Activated CD4-positive, alpha-beta T cell treated with anti-CD3 and anti-CD28 coated beads, Interleukin-2, amount 10 ng/mL, durations not matched to agents 7 days and 5 days (primary cell): ENCODE measurements at regions of chr16 and their contacts with region 1.

Region 1: GRCh38 chr16:30091474-30092372 is at the start of gene TBX6:
- DNase-seq: peak; percentile 93
- H3K4me3 Mint-ChIP-seq: peak within 1 kb of the TSS; percentile 81
- H3K27ac Mint-ChIP-seq: peak within 1 kb of the TSS; percentile 90
- H3K4me1 Mint-ChIP-seq: peaks cover 65% of the 10 kb centered on the region
- H3K27me3 Mint-ChIP-seq: no peaks in the 10 kb centered on the region
- total RNA-seq, gene TBX6: 1.2 to 1.7 TPM

Region 2: DNA sequence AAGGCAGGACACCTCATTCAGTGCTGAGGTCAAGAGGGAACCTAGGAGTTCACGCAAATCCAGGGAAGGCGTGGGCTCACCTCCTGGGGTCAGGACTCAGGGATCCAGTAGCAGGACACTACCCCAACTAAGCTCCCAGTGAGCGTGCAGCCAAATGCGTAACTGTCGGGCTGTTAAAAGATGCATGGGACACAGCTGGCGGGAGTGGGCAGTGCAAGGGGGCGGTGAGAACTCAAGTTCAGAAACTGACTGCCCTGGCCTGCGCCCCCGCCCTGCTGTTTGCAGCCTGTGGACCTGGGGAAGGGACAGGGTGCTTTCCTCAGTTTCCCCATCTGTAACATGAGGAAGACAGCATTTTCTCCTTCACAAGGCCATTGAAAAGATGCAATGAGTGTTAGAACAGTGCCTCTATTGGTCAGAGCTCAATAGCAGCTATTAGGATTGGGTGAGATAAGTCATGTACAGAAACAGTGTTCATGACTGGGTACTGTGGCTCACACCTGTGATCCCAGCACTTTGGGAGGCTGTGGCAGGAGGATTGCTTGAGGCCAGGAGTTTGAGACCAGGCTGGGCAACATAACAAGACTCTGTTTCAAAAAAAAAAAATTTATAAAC is 248.9 kb before region 1 on chr16:
- CTCF ChIA-PET with region 1: no interaction called
- POLR2A ChIA-PET with region 1: no interaction called
- DNase-seq: no peak
- H3K4me3 Mint-ChIP-seq: no peak overlapping the region
- H3K27ac Mint-ChIP-seq: no peak overlapping the region
- H3K4me1 Mint-ChIP-seq: peaks cover 8% of the 10 kb centered on the region
- H3K27me3 Mint-ChIP-seq: no peaks in the 10 kb centered on the region

Region 3: DNA sequence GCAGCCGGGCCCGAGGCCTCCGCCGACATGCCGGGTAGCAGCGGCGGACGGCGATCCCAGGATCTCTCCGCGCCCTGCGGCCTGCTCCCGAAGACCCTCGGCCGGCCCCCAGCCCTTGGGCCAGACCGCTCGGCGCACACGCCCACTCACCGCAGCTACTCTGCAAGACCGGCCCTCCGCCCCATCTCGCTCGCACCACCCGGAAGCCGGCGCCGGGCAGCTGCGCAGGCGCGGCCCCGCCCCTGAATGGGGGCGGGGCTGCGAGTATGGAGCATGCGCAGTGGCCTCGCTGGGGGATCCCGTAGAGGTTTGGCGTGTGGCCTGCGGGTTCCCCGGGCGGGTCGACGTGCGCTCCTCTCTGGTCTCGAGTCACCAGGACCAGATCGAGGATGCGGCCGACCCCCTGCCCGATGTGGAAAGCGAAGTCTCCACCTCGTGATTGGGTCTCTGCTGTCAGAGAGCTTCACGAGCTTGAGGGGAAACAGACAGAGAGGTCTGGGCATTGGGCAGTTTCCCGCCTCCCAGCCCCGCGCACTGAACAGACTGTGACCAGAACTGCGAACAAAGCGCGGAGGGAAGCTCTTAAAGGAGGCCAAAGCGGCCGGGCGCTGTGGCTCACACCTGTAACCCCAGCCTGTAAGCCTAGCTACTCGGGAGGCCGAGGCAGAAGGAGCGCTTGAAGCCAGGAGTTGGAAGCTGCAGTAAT is 165.6 kb before region 1 on chr16 and contains the start of gene KCTD13:
- CTCF ChIA-PET with region 1: no interaction called
- POLR2A ChIA-PET with region 1: no interaction called
- DNase-seq: peak; percentile 86
- H3K4me3 Mint-ChIP-seq: peak within 1 kb of the TSS; percentile 89
- H3K27ac Mint-ChIP-seq: peak within 1 kb of the TSS; percentile 94
- H3K4me1 Mint-ChIP-seq: peaks cover 36% of the 10 kb centered on the region
- H3K27me3 Mint-ChIP-seq: no peaks in the 10 kb centered on the region
- total RNA-seq, gene KCTD13: 28.4 to 36.1 TPM

Region 4: DNA sequence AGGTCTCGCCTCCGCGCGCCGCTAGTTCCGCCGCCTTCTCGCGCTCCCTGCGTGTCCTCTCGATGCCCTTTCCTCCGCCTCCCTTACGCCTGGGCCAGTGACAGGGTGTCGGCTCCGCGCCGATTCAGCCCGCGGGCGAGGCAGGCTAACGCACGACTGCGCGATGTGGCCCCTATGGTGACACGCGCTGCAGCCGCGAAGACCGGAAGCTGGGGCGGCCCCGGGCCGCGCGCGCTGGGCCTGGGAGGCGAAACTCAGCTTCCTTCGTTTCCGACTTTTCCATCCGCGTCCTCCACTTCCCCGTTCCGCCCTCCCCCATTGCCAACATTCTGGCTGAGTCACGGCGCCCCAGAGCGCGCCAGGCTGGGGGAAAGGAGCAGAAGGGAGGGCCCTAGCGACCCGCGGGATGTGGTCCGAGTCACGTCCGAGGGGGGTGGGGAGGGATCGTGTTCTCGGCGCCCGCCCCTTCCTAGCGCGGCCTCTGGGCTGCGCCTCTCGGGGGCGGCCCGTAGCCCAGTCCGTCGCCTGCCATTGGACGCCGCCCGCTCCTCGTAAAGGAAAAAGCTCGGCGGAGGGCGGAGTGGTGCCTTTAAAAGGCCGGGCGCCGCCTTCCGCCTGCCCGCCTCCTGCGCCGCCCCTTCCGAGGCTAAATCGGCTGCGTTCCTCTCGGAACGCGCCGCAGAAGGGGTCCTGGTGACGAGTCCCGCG is 26.4 kb before region 1 on chr16 and contains the start of gene ALDOA:
- CTCF ChIA-PET with region 1: interaction called, 39 read pairs
- POLR2A ChIA-PET with region 1: interaction called, 7 read pairs
- DNase-seq: peak; percentile 96
- H3K4me3 Mint-ChIP-seq: peak within 1 kb of the TSS; percentile 99
- H3K27ac Mint-ChIP-seq: peak within 1 kb of the TSS; percentile 99
- H3K4me1 Mint-ChIP-seq: peaks cover 41% of the 10 kb centered on the region
- H3K27me3 Mint-ChIP-seq: no peaks in the 10 kb centered on the region
- total RNA-seq, gene ALDOA: 1,139 to 1,329 TPM

Region 5: DNA sequence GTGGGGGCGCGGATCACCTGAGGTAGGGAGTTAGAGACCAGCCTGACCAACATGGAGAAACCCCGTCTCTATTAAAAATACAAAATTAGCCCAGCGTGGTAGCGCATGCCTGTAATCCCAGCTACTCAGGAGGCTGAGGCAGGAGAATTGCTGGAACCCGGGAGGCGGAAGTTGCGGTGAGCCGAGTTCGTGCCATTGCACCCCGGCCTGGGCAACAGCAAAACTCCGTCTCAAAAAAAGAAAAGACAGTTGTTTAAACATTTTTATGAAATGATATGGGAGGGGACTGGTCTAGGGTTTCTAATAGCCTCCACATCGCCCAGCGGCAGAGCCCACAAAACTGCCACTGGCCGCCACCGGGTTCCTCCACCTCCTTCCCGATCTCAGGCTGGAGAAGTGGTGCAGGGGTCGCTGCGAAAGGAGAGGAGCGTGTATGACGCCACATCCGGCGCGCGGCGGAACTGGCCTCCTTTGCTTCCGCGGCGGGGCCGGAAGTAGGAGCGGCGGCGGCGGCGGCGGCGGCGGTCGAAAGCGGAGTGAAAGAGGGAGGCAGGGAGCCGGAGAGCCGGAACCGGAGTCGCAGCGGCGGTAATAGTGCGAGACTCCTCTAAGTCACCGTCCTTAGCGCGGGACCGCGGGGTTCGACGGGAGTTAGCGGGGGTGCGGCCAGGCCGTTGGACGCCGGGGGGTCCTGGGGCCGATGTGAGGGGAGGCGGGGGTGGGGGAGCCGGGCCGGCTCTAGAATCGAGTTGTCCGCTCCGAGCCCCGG is 16.0 kb before region 1 on chr16 and contains the start of gene PPP4C:
- CTCF ChIA-PET with region 1: interaction called, 112 read pairs
- POLR2A ChIA-PET with region 1: interaction called, 4 read pairs
- DNase-seq: peak; percentile 92
- H3K4me3 Mint-ChIP-seq: peak within 1 kb of the TSS; percentile 81
- H3K27ac Mint-ChIP-seq: peak within 1 kb of the TSS; percentile 91
- H3K4me1 Mint-ChIP-seq: peaks cover 43% of the 10 kb centered on the region
- H3K27me3 Mint-ChIP-seq: no peaks in the 10 kb centered on the region
- total RNA-seq, gene PPP4C: 129 to 136 TPM

Region 6: DNA sequence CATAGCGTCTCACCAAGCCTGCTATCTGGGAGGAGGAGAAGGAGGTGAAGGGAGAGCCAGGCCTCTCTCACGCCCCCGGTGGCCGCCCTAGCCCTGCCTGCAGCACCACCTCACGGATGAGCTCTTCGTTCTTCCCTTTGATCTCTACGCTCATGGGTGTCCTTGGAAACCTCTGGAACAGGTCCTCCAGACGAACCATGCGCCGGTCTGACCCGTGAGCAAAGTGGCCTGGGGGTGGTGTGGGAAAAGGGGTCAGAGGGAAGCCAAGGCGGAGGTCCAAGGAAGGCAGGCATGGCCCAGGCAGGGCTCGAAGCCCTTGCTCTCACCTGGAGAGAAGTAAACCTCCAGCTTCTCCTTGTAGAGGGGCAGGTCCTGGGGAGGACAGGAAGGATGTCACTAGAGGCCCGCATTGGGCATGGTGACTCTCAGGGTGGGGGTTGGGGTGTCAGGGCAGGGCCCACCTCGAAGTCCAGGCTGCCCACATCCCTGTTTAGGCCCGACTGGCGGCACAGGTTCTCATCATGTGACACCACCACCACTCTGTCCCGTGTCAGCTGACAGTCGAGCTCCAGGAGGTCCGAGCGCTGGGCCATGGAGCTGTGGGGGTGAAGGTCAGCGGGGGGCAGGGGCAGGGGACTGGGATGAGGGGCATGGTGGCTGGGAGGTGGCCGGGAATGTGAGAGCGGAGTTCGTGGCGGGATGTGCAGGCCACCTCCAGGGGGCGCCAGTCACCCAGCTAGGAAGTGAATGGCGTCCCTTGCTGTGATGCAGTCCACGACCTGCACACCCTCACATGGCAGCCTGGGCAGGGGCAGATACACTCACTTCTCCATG is 20.7 kb after region 1 on chr16:
- CTCF ChIA-PET with region 1: interaction called, 32 read pairs
- POLR2A ChIA-PET with region 1: no interaction called
- DNase-seq: peak; percentile 68
- H3K4me3 Mint-ChIP-seq: no peak overlapping the region
- H3K27ac Mint-ChIP-seq: peak overlapping the region; percentile 36
- H3K4me1 Mint-ChIP-seq: peaks cover 10% of the 10 kb centered on the region
- H3K27me3 Mint-ChIP-seq: no peaks in the 10 kb centered on the region

Region 7: GRCh38 chr16:30131869-30132475 is 40.2 kb after region 1 on chr16:
- CTCF ChIA-PET with region 1: interaction called, 10 read pairs
- POLR2A ChIA-PET with region 1: no interaction called
- DNase-seq: no peak
- H3K4me3 Mint-ChIP-seq: no peak overlapping the region
- H3K27ac Mint-ChIP-seq: no peak overlapping the region
- H3K4me1 Mint-ChIP-seq: no peaks in the 10 kb centered on the region
- H3K27me3 Mint-ChIP-seq: no peaks in the 10 kb centered on the region

Region 8: DNA sequence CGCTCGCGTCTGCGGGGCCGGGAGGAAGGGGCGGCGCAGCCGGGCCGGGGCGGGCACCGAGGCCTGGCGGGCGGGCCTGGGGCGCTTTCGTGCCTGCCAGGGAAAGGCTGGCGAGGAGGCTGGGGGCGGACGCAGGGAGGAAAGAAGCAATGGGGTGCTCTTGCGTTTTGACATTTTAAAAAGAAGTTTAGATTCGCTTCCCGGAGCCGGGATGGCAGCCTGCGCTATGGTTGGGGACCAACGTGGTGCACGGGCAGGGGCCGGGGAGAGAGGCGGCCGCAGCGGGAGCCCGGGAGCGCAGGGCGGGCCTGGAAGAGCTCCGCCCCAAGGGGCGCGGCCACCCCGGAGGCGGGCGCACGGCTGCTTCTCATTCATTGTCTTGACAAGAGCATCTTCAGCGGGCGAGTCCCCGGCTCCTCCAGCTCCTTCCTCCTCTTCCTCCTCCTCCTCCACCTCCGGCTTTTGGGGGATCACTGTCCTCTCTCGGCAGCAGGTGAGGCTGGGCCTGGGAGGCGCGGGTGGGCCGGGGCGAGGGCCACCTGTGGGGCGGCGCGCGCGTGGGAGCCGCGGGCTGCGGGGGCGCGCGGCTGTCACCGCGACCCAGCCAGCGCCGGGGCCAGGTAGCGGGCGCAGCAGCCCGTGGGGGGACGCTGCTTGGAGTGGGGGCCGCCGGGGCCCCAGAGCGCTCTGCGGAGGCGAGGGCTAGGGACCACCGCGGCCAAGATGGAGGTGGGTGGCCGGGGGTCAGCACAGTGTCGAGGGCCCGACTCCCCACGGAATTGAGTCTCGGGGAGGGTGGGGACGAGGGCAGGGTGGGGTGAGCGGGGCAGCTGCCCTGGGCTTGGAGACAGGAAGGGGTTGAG is 91.7 kb after region 1 on chr16 and contains the start of gene CORO1A:
- CTCF ChIA-PET with region 1: interaction called, 28 read pairs
- POLR2A ChIA-PET with region 1: interaction called, 5 read pairs
- DNase-seq: peak; percentile 89
- H3K4me3 Mint-ChIP-seq: peak within 1 kb of the TSS; percentile 99
- H3K27ac Mint-ChIP-seq: peak within 1 kb of the TSS; percentile 97
- H3K4me1 Mint-ChIP-seq: peaks cover 25% of the 10 kb centered on the region
- H3K27me3 Mint-ChIP-seq: no peaks in the 10 kb centered on the region
- total RNA-seq, gene CORO1A: 1,809 to 1,847 TPM